Mammary epithelial cell (primary cell): ENCODE measurements at regions of chr7 and their contacts with region 1.

Region 1: DNA sequence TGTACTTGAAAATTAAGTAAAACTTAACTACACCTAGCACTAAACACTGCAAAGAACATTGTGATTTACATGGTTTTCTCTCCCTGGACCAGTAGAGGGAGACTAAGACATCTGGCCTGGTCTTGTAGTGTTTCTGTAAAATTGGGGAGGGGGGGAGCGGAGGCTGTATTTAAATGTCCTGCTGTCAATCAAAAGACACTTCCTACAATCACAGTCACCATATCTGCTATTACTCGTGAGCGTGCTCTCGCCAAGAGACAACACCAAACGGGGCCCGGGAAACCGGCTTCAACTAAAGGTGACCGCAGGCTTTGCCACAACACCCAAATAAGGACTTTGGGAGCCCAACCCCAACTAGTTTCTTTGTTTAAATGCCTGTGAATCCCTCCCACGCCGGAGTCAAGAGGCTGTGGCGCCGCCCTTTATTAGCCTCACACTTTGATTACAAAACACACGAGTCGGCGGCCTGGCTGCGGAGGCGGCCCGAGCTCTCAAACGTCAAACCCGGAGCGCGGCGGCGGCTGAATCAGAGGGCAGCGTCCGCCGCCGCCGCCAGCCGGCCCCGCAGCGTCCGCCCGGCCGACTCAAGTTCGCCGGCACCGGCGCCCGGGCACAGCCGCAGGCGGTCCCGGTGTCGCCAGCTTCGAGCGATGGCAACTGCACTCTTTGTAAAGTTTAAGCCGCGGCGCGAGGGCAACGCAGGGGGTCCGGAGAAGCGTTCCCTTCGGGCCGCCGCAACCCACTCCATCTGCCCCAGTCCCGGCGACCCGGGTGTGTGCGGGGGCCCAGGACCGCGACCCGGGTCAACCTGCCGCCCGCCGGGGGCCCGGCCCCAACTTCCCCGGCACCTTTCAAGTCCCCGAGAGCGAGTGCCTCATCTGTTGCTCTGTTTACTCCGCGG is 1.3 kb downstream of the KDM7A start:
- DNase-seq: peak; percentile 97
- H3K4me3 ChIP-seq: peak overlapping the region; percentile 77 to 86 (median 77)
- H3K27ac ChIP-seq: peak overlapping the region; percentile 74
- H3K4me1 ChIP-seq: peaks cover 9% of the 10 kb centered on the region
- H3K27me3 ChIP-seq: no peaks in the 10 kb centered on the region
- CTCF ChIP-seq: peak; percentile 70 to 90

Region 2: GRCh38 chr7:140062528-140063299 is 112.8 kb before region 1 on chr7 and contains the start of gene PARP12:
- CTCF ChIA-PET with region 1: no interaction called
- dilution Hi-C with region 1: no loop called
- in situ Hi-C with region 1: no loop called
- intact Hi-C with region 1: loop called (anchors 5 kb)
- DNase-seq: peak; percentile 76
- H3K4me3 ChIP-seq: peak within 1 kb of the TSS; percentile 48 to 68 (median 61)
- H3K27ac ChIP-seq: peak within 1 kb of the TSS; percentile 28
- H3K4me1 ChIP-seq: peaks cover 23% of the 10 kb centered on the region
- H3K27me3 ChIP-seq: no peaks in the 10 kb centered on the region
- CTCF ChIP-seq: no peak
- total RNA-seq, gene PARP12: 16.0 to 19.3 TPM

Region 3: GRCh38 chr7:140304191-140304799 is 128.8 kb after region 1 on chr7:
- CTCF ChIA-PET with region 1: no interaction called
- dilution Hi-C with region 1: no loop called
- in situ Hi-C with region 1: loop called in 1 of 2 experiments (anchors 25 kb)
- intact Hi-C with region 1: no loop called
- DNase-seq: peak; percentile 2
- H3K4me3 ChIP-seq: no peak overlapping the region
- H3K27ac ChIP-seq: no peak overlapping the region
- H3K4me1 ChIP-seq: no peaks in the 10 kb centered on the region
- H3K27me3 ChIP-seq: no peaks in the 10 kb centered on the region
- CTCF ChIP-seq: peak in 1 of 2 donors; percentile 31

Region 4: DNA sequence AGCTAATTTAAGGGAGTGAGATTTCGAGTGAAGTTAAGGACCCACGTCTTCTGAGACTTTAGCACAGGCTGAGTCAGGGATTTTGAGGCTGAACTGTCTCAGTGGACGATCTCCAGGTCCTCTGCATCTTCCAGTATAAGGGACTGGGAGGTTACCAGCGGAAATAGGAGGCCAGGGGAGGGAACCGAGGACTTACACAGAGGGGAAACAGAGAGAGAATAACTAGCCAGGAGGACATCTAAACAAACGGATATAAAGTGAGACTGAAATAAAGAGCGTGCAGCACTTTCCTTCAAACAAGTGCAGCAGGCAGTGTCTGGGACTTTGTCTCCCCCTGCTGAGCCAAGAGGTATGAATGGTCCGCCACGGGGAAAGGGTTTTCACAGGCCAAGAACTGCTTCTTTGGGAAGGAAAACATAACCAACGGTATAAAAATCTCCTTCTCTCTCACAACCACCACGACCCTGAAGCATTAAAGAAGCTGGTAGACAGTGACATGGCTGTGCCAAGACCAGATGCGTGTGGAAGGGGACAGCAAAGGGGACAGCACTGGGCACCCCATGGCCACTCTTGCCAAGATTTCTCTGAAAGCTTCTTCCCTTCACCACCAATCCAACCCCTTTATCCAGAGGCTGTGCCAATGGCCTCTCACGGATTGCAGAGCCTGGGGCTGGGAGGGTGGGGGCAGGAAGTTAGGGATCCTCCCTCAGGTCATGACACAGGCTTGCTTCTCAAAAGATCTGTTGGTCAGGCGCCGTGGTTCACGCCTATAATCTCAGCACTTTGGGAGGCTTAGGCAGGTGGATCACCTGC is 150.9 kb after region 1 on chr7:
- CTCF ChIA-PET with region 1: no interaction called
- dilution Hi-C with region 1: no loop called
- in situ Hi-C with region 1: loop called in 1 of 2 experiments (anchors 25 kb)
- intact Hi-C with region 1: loop called (anchors 1 kb)
- DNase-seq: peak; percentile 46
- H3K4me3 ChIP-seq: no peak overlapping the region
- H3K27ac ChIP-seq: no peak overlapping the region
- H3K4me1 ChIP-seq: no peaks in the 10 kb centered on the region
- H3K27me3 ChIP-seq: no peaks in the 10 kb centered on the region
- CTCF ChIP-seq: peak; percentile 58 to 89

Region 5: GRCh38 chr7:140494867-140495266 is 319.4 kb after region 1 on chr7:
- CTCF ChIA-PET with region 1: no interaction called
- dilution Hi-C with region 1: no loop called
- in situ Hi-C with region 1: no loop called
- intact Hi-C with region 1: loop called (anchors 2 kb)
- DNase-seq: no peak
- H3K4me3 ChIP-seq: no peak overlapping the region
- H3K27ac ChIP-seq: no peak overlapping the region
- H3K4me1 ChIP-seq: no peaks in the 10 kb centered on the region
- H3K27me3 ChIP-seq: no peaks in the 10 kb centered on the region
- CTCF ChIP-seq: no peak